Right ventricle myocardium superior (tissue), 1 donor: ENCODE measurements at regions of chr19 and their contacts with region 1.

Region 1: GRCh38 chr19:40529093-40529954 is 47.3 kb upstream of the SHKBP1 start:
- DNase-seq: peak; percentile 90
- ATAC-seq: peak; percentile 98

Region 2: GRCh38 chr19:40305403-40305802 is 223.9 kb before region 1 on chr19:
- intact Hi-C with region 1: loop called (anchors 10 kb)
- DNase-seq: no peak
- ATAC-seq: peak; percentile 89

Region 3: GRCh38 chr19:40598121-40598917 is 69.0 kb after region 1 on chr19:
- intact Hi-C with region 1: loop called (anchors 5 kb)
- DNase-seq: peak; percentile 93
- ATAC-seq: peak; percentile 68

Region 4: DNA sequence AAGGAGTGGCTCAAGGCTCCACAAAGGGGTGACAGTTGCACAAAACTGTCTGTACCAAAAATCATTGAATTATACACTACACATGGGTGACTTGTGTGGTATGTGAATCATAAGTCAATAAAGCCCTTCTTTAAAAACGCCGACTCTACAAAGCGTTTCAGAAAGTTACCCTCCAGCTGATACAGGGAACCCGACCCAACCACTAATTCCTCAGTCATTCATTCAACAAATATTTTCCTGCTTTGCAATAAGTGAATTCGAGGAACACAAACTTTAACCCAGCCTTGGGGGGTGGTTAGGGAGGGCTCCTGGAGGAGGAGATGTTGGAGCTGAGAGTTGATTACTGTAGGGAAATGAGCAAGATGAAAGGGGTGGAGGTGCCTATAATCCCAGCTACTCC is 103.9 kb after region 1 on chr19:
- intact Hi-C with region 1: loop called (anchors 10 kb)
- DNase-seq: no peak
- ATAC-seq: no peak

Region 5: DNA sequence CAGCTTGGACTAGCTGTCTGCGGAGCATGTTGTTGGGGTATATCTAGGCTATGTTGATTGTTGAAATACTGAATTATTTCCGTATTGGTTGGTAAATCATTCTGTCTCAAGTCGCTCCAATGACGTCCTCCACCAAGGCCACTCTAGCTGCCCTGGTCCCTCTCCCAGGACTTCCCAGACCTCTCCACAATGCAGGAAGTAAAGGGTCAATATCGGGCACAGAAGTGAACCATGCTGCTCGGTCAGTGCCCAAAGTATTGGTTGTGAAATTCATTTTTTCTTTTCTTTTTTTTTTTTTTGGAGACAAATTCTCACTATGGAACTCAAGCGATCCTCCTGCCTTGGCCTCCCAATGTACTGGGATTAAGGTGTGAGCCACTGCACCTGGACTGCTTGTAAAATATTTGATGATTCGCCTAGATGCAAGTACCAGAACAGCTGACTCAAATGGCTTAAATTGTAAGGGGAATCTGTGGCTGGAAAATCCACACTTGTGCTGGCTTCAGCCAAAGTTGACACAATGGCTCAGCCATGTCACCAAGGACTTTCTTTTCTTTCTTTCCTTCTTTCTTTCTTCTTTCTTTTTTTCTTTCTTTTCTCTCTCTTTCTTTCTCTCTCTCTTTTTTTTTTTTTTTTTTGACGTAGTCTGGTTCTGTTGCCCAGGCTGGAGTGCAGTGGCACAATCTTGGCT is 117.4 kb after region 1 on chr19:
- intact Hi-C with region 1: no loop called
- DNase-seq: no peak
- ATAC-seq: no peak